KBM-7 (cell line): ENCODE measurements at regions of chr17 and their contacts with region 1.

Region 1: DNA sequence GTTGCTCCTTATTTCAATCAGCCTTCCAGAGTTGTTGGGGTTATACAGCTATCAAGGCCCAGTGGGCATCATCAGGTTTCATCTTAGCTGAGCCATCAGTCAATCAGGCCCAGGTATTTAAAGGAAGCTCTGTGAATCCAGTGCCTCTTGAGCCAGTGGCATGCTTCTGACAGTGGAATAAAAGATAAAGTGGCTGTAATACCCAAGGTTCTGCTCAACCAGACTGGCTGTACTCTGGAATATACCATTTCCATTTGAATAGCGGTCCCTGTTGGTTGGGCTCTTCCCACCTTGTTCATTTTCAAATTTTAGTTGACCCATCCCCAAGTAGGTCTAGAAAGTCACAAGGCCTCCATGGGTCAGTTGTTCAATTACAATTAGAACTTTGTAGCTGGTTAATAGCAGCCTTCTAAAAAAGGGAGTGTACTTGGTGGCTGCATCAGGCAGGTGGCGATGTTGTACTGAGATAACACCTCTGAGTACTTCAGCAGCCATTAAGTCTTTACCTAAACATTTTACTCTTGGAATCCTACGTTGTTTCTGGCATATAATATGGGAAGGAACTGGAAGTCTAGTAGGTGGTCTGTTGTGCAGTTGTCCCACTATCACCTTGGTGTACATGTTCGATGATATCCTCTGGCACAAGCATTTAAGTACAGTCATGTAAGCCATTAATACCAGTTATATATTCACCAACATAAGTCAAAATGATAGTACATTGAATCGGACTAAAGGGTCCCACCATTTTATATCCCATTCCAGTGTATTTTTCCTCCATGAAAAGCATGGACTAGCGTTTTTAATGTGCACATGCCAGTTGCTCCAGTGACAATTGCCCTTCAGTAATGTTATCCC is 294.1 kb downstream of the BCAS3 start:
- DNase-seq: peak; percentile 47

Region 2: DNA sequence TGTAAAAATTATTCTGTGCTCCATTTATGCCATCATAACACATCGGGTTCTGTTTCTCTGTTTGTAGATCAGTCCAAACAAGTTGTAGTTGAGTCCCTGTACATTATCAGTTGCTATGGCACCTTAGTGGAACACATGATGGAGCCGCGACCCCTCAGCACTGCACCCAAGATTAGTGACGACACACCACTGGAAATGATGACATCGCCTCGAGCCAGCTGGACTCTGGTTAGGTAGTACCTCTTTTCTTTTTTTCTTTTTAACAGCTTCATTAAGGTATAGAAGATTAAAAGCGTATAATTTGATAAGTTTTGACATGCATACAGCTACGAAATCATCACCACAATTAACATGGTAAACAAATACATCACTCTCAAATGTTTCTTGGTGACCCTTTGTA is 66.1 kb after region 1 on chr17:
- in situ Hi-C with region 1: no loop called
- DNase-seq: no peak

Region 3: DNA sequence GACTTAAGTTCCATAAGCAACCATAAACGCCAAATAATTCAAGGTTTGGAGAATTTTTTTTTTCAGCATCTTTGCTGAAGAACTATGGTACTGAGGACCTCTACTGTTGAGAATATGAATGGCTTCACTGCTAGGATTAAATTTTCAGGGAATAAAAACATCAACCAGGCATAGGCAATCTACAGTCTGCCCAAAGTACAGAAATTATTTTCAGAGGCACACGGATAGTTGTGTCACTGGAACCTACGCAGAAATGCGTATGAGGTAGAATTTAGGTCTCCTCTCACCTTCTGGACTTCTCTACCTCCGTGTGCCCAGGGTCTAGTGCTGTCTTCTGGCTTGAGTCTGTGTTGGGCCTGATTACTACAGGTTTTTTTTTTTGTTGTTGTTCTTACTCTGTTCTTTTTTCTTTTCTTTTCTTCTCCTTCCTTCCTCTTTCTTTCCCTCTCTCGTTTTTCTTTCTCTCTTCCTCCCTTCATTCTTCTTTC is 579.6 kb after region 1 on chr17:
- in situ Hi-C with region 1: loop called (anchors 25 kb)
- DNase-seq: peak; percentile 70